ENCODE measurements at regions of chr20 and their contacts with region 1.

Region 1: DNA sequence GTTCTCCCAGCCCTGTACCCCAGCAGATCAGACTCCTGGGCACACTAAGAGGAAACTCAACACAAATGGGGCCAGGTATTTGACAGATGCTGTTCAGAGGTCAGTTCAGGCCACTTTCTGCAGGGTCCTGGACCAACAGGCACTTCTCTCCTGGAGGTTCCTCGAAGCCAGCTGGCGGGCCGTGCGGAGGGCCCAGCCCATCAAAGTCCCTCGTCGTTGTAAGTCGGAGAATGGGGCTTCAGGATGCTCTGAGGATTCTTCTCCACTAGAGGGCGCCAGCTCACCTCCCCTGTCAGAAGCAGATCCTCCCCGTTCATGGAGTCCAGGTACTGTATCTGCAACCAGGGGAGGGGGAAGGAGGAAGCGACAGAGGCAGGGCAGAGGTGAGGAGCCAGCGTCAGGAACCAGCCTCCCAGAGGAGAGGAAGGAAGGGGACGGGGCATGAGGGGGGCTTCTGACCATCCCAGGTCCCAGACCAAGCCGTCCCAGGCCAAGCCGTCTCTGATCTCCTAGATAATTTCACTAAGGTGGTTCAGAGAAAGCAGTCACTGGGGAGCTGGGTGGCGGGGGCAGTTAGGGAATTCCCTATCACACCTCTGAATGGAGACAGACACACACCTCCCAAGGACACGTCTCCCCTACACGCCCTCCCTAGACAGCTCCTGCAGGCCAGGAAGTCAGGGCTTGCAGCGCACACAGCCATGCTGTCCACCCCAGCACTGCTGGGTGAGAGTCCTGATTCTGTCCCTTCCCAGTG is 11.7 kb upstream of the FAM83C start:
- DNase-seq: peak; percentile 78 to 87
- ATAC-seq: peak; percentile 80

Region 2: GRCh38 chr20:35432430-35432735 is 128.5 kb after region 1 on chr20:
- intact Hi-C with region 1: loop called in 1 of 2 experiments (anchors 10 kb)
- DNase-seq: no peak
- ATAC-seq: peak; percentile 64

Region 3: DNA sequence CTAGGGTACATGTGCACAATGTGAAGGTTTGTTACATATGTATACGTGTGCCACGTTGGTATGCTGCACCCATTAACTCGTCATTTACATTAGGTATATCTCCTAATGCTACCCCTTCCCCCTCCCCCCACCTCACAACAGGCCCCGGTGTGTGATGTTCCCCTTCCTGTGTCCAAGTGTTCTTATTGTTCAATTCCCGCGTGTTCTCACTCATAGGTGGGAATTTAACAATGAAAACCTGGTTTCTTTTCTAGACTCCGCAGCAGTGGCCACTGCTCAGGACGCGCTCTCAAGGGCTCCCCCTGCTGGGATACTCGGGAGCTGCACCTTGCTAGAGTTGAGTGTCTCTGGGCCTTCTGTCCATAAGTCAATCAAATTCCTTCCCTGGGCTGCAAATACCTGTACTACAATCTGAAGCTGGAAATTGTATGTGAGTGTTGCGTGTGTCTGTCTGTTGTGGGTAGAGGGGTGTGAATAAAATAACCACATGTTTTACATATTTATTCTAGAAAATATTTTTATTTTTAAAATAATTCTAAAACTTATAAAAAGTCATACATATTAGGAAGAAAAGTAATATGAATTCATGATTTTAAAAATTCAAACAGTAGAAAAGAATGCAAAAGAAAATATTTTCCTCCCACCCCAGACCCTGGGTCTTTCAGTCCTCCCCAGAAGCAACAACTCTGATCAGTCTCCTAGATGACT is 143.3 kb after region 1 on chr20:
- intact Hi-C with region 1: loop called in 1 of 2 experiments (anchors 5 kb)
- DNase-seq: peak; percentile 74 to 93
- ATAC-seq: peak; percentile 87